ENCODE measurements at regions of chr2 and their contacts with region 1.

Region 1: GRCh38 chr2:189783927-189784867 is at the starts of genes ORMDL1 and PMS1:
- DNase-seq: peak; percentile 93
- H3K4me3 Mint-ChIP-seq: peak within 1 kb of the TSS; percentile 93
- H3K27ac Mint-ChIP-seq: peak within 1 kb of the TSS; percentile 92
- H3K4me1 Mint-ChIP-seq: peaks cover 51% of the 10 kb centered on the region
- H3K27me3 Mint-ChIP-seq: no peaks in the 10 kb centered on the region
- total RNA-seq, gene ORMDL1: 34.6 to 37.3 TPM
- total RNA-seq, gene PMS1: 29.7 to 32.5 TPM

Region 2: DNA sequence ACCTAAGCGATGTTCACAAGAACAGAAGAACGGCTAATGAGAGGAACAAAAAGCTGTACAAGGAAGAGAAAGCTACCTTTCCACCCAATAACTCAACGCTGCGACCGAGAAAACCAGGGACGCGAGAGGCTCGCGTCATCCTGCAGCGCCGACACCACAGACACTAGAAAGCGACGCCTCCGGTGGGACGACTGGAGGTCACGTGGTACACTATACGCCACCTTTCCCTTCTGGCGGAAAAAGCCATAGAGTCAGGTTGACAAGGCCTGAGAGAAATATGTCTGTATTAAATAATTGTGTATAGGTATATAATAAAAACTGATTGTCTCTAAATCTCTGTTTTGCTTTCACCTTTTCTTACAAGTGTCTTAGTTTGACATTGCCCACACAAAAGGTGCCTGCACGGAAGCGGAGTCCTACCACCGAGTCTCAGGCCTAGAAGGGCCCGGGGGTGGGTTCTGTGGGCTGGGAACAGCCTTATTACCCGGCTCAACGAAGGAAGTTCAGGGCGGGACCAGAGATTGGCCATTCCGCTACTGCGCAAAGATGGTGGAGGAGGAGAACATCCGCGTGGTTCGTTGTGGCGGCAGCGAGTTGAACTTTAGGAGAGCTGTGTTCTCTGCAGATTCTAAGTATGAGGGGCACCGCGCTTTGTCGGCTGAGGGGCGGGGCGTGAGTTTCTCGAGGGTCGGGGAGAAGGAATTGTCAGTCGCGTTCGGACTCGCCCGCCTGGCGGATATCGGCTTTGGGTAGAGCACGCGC is 343.1 kb before region 1 on chr2 and contains the start of gene WDR75:
- CTCF ChIA-PET with region 1: no interaction called
- intact Hi-C with region 1: loop called (anchors 1 kb)
- DNase-seq: peak; percentile 95
- H3K4me3 Mint-ChIP-seq: no peak within 1 kb of the TSS
- H3K27ac Mint-ChIP-seq: peak within 1 kb of the TSS; percentile 97
- H3K4me1 Mint-ChIP-seq: peaks cover 12% of the 10 kb centered on the region
- H3K27me3 Mint-ChIP-seq: no peaks in the 10 kb centered on the region
- total RNA-seq, gene WDR75: 69.7 to 72.7 TPM

Region 3: GRCh38 chr2:189580658-189581353 is 203.4 kb before region 1 on chr2 and contains the start of gene SLC40A1:
- CTCF ChIA-PET with region 1: no interaction called
- intact Hi-C with region 1: loop called (anchors 1 kb)
- DNase-seq: peak; percentile 67
- H3K4me3 Mint-ChIP-seq: peak within 1 kb of the TSS; percentile 85
- H3K27ac Mint-ChIP-seq: peak within 1 kb of the TSS; percentile 82
- H3K4me1 Mint-ChIP-seq: peaks cover 44% of the 10 kb centered on the region
- H3K27me3 Mint-ChIP-seq: peaks cover 5% of the 10 kb centered on the region
- total RNA-seq, gene SLC40A1: 3.8 to 4.1 TPM

Region 4: GRCh38 chr2:189641590-189641989 is 142.6 kb before region 1 on chr2:
- CTCF ChIA-PET with region 1: no interaction called
- intact Hi-C with region 1: no loop called
- DNase-seq: peak; percentile 71
- H3K4me3 Mint-ChIP-seq: no peak overlapping the region
- H3K27ac Mint-ChIP-seq: peak overlapping the region; percentile 10
- H3K4me1 Mint-ChIP-seq: peaks cover 25% of the 10 kb centered on the region
- H3K27me3 Mint-ChIP-seq: no peaks in the 10 kb centered on the region

Region 5: GRCh38 chr2:189751080-189751658 is 33.0 kb before region 1 on chr2:
- CTCF ChIA-PET with region 1: interaction called, 4 read pairs
- intact Hi-C with region 1: loop called (anchors 5 kb)
- DNase-seq: peak; percentile 59
- H3K4me3 Mint-ChIP-seq: no peak overlapping the region
- H3K27ac Mint-ChIP-seq: no peak overlapping the region
- H3K4me1 Mint-ChIP-seq: no peaks in the 10 kb centered on the region
- H3K27me3 Mint-ChIP-seq: no peaks in the 10 kb centered on the region

Region 6: GRCh38 chr2:189819297-189819704 is 35.1 kb after region 1 on chr2:
- CTCF ChIA-PET with region 1: no interaction called
- intact Hi-C with region 1: loop called (anchors 1 kb)
- DNase-seq: no peak
- H3K4me3 Mint-ChIP-seq: no peak overlapping the region
- H3K27ac Mint-ChIP-seq: peak overlapping the region; percentile 68
- H3K4me1 Mint-ChIP-seq: peaks cover 22% of the 10 kb centered on the region
- H3K27me3 Mint-ChIP-seq: no peaks in the 10 kb centered on the region

Region 7: GRCh38 chr2:190408538-190409271 is 624.5 kb after region 1 on chr2:
- CTCF ChIA-PET with region 1: no interaction called
- intact Hi-C with region 1: loop called (anchors 2 kb)
- DNase-seq: peak; percentile 71
- H3K4me3 Mint-ChIP-seq: peak overlapping the region; percentile 84
- H3K27ac Mint-ChIP-seq: peak overlapping the region; percentile 90
- H3K4me1 Mint-ChIP-seq: peaks cover 46% of the 10 kb centered on the region
- H3K27me3 Mint-ChIP-seq: no peaks in the 10 kb centered on the region

Measured in activated naive CD4-positive, alpha-beta T cell treated with anti-CD3 and anti-CD28 coated beads for 36 hours (primary cell).